ENCODE measurements at regions of chr3 and their contacts with region 1.

Region 1: DNA sequence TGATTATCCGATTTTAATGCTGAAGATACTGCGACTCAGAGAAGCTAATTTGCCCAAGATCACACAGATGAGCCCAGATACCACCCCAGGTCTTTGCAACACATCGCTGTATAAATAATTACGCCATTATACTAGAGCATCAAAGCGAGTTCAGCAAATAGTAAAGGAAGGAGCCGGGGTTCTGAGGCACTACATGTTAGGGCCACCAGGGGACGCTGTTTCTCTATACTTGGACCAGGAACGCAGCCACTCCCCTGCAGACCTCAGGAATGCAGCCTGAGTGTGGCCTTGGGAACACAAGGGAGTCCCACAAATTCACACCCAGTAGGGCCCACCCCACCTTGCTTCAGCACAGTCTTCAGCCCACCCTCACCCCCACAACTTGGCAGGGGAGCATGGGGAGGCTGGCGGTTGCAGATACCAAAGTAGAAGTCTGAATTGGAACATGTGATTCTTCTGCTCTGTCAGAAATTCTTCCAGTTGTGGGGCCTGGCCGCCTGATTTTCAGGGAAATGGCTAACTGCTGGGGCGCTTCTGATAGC is 57.8 kb upstream of the RYK start:
- DNase-seq: peak; percentile 89
- H3K4me3 ChIP-seq: no peak overlapping the region
- H3K27ac ChIP-seq: peak overlapping the region; percentile 55
- H3K4me1 ChIP-seq: peaks cover 17% of the 10 kb centered on the region
- H3K27me3 ChIP-seq: no peaks in the 10 kb centered on the region
- CTCF ChIP-seq: peak; percentile 97

Region 2: GRCh38 chr3:133487920-133488540 is 820.4 kb before region 1 on chr3:
- CTCF ChIA-PET with region 1: no interaction called
- POLR2A ChIA-PET with region 1: no interaction called
- intact Hi-C with region 1: no loop called
- DNase-seq: peak; percentile 42
- H3K4me3 ChIP-seq: no peak overlapping the region
- H3K27ac ChIP-seq: no peak overlapping the region
- H3K4me1 ChIP-seq: no peaks in the 10 kb centered on the region
- H3K27me3 ChIP-seq: no peaks in the 10 kb centered on the region
- CTCF ChIP-seq: peak; percentile 57

Region 3: DNA sequence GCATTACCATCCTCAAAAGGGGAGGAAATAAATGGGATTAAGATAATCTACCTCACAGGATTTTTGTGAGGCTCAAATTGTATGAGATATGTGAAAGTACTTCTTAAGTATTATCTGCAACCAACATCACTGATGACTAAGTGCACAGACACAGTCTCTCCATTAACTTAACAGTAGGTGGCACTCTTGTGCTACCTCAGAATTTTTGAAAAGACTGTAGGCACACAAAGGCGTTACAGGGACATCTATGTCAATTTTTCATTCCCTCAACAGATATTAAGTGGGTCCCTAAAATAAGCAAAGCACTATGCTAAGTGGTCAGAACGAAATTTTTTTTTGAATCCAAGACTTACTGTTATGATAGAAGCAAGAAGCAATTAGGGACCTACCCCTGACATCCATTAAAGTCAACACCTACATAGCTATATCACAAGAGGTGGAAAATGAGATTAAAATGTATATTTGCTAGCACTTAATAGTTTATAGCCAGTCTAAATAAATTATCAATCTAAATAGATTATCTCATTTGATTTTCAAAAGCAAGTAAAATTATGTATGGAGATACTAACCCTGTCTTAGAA is 110.7 kb before region 1 on chr3:
- CTCF ChIA-PET with region 1: interaction called, 8 read pairs
- POLR2A ChIA-PET with region 1: no interaction called
- intact Hi-C with region 1: loop called (anchors 5 kb)
- DNase-seq: peak; percentile 79
- H3K4me3 ChIP-seq: no peak overlapping the region
- H3K27ac ChIP-seq: no peak overlapping the region
- H3K4me1 ChIP-seq: no peaks in the 10 kb centered on the region
- H3K27me3 ChIP-seq: no peaks in the 10 kb centered on the region
- CTCF ChIP-seq: peak; percentile 78

Region 4: DNA sequence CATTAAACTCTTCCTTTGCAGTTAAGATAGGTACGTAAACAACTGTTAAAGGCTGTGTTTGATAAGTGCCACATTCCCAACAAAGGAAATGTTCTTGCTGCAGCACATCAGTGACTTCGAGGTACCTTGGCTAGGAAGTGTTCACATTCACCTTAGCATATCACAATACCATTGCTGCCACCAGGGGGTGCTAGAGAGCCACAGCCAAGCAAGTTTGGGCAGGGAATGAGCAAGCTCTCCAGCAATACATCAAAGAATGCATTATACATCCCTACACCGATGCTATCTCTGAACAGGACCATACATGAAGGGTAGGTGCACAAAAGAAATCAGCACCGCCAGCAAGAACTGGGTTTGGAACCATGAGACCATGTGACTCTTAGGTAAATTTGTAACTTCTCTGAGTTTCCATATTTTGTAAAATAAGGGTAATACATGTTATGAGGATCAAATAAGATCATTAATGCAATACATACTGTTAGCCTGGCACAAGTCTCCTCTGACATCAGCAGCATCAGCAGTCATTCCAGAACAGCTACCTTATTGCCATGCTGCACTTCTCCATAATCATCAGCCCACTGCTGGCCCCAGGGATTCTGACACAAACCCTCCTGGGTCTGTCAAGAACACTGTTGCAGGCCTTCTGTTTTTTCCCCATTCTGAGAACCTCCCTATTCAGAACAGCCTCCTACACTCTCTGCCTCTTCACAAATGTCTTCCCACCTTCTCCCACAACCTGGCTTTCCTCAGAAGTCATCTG is 95.3 kb before region 1 on chr3:
- CTCF ChIA-PET with region 1: interaction called, 10 read pairs
- POLR2A ChIA-PET with region 1: no interaction called
- intact Hi-C with region 1: no loop called
- DNase-seq: peak; percentile 86
- H3K4me3 ChIP-seq: no peak overlapping the region
- H3K27ac ChIP-seq: no peak overlapping the region
- H3K4me1 ChIP-seq: no peaks in the 10 kb centered on the region
- H3K27me3 ChIP-seq: no peaks in the 10 kb centered on the region
- CTCF ChIP-seq: peak; percentile 97

Region 5: GRCh38 chr3:134348524-134348923 is 40.1 kb after region 1 on chr3:
- CTCF ChIA-PET with region 1: no interaction called
- POLR2A ChIA-PET with region 1: no interaction called
- intact Hi-C with region 1: no loop called
- DNase-seq: no peak
- H3K4me3 ChIP-seq: no peak overlapping the region
- H3K27ac ChIP-seq: no peak overlapping the region
- H3K4me1 ChIP-seq: no peaks in the 10 kb centered on the region
- H3K27me3 ChIP-seq: no peaks in the 10 kb centered on the region
- CTCF ChIP-seq: no peak

Region 6: DNA sequence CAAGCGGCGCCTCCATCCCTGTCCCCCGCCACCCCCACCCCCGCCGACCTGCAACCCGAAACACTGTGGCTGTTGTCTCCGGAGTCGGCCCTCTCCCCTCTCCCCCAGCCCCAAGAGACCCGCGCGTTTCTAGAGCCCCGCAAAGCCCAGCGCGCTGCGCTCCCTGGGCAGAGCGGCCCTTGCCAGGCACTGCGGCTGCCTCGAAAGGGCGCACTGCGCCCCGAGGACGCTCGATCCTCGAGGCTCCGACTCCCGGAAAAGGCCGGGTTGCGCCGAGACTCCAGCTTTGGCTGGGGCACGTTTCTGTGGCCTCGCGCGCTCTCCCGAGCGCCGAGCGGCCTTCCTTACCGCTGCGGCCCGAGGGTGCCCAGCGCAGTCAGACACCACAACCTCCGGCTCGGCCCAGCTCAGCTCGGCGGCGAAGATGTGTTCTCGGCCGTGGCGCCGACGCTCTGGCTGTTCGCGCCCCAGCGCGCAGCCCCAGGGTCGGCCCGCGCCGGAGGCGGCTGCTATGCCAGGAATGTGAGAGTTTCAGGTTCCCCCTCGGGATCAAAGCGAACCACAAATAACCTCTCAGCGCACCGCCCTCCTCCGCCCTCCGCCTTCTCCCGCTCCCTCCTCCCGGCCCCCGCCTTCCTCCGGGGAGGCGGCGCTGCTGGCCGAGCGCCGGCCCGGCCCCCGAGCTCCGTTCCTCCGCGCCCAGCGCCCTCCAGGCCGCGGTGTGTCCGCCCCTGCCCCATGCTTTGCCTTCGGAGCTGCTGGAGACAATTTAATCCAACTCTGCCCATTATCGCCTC is 65.8 kb after region 1 on chr3 and contains the start of gene AMOTL2:
- CTCF ChIA-PET with region 1: no interaction called
- POLR2A ChIA-PET with region 1: no interaction called
- intact Hi-C with region 1: loop called (anchors 1 kb)
- DNase-seq: peak; percentile 93
- H3K4me3 ChIP-seq: peak within 1 kb of the TSS; percentile 68
- H3K27ac ChIP-seq: peak within 1 kb of the TSS; percentile 98
- H3K4me1 ChIP-seq: peaks cover 40% of the 10 kb centered on the region
- H3K27me3 ChIP-seq: no peaks in the 10 kb centered on the region
- CTCF ChIP-seq: no peak
- total RNA-seq, gene AMOTL2: 38.9 and 59.6 TPM in 2 replicates

Region 7: GRCh38 chr3:134449277-134449676 is 140.9 kb after region 1 on chr3:
- CTCF ChIA-PET with region 1: interaction called, 5 read pairs
- POLR2A ChIA-PET with region 1: no interaction called
- intact Hi-C with region 1: loop called (anchors 1 kb)
- DNase-seq: peak; percentile 58
- H3K4me3 ChIP-seq: no peak overlapping the region
- H3K27ac ChIP-seq: no peak overlapping the region
- H3K4me1 ChIP-seq: peaks cover 5% of the 10 kb centered on the region
- H3K27me3 ChIP-seq: no peaks in the 10 kb centered on the region
- CTCF ChIP-seq: peak; percentile 55

Region 8: GRCh38 chr3:134473868-134474546 is 165.6 kb after region 1 on chr3:
- CTCF ChIA-PET with region 1: interaction called, 16 read pairs
- POLR2A ChIA-PET with region 1: no interaction called
- intact Hi-C with region 1: loop called (anchors 1 kb)
- DNase-seq: peak; percentile 81
- H3K4me3 ChIP-seq: no peak overlapping the region
- H3K27ac ChIP-seq: no peak overlapping the region
- H3K4me1 ChIP-seq: no peaks in the 10 kb centered on the region
- H3K27me3 ChIP-seq: no peaks in the 10 kb centered on the region
- CTCF ChIP-seq: peak; percentile 81